ENCODE measurements at regions of chr6 and their contacts with region 1.

Region 1: DNA sequence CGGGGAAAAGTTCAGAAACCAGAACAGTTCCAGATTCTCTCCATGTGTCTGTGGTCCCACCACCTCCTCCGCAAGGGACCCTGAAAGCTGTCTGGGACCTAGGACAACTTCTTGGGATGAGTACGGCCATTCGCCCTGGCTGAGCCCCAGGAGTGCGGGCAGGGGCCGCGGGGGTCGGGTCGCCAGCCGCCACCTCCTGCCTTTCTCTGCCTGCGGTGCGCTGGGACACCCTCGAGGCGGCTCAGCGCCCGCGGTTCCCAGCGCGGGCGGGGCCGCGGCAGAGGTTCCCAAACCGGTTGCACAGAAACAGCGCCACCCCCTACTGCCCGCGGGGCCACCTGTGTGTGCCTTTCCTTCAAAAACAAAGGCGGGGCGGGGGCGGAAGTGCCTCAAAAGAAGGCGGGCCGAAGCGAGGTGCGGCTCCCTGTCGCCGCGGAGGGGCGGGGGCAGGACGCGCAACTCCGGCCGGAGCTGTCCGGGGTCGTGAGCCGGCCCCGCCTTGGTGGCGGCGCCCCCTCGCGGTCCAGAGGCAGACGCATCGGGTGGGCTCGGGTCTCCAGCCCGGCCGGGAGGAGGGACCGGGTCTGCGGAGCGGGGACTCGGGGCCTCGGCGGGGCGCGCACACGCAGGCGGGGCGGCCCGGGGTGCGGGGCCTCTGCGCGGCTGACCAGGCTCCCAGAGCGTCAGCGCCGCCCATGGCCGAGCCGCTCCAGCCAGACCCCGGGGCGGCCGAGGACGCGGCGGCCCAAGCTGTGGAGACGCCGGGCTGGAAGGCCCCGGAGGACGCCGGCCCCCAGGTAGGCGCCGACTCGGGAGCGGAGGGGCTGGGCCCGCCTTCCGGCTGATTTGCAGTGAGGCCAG is at the start of gene HEBP2:
- DNase-seq: peak; percentile 92
- CTCF ChIP-seq: peak; percentile 65

Region 2: GRCh38 chr6:138349891-138350290 is 54.1 kb before region 1 on chr6:
- CTCF ChIA-PET with region 1: no interaction called
- POLR2A ChIA-PET with region 1: no interaction called
- DNase-seq: no peak
- CTCF ChIP-seq: no peak

Region 3: GRCh38 chr6:138415125-138415524 is 11.1 kb after region 1 on chr6:
- CTCF ChIA-PET with region 1: interaction called, 29 read pairs
- POLR2A ChIA-PET with region 1: interaction called, 5 read pairs
- DNase-seq: no peak
- CTCF ChIP-seq: no peak

Region 4: DNA sequence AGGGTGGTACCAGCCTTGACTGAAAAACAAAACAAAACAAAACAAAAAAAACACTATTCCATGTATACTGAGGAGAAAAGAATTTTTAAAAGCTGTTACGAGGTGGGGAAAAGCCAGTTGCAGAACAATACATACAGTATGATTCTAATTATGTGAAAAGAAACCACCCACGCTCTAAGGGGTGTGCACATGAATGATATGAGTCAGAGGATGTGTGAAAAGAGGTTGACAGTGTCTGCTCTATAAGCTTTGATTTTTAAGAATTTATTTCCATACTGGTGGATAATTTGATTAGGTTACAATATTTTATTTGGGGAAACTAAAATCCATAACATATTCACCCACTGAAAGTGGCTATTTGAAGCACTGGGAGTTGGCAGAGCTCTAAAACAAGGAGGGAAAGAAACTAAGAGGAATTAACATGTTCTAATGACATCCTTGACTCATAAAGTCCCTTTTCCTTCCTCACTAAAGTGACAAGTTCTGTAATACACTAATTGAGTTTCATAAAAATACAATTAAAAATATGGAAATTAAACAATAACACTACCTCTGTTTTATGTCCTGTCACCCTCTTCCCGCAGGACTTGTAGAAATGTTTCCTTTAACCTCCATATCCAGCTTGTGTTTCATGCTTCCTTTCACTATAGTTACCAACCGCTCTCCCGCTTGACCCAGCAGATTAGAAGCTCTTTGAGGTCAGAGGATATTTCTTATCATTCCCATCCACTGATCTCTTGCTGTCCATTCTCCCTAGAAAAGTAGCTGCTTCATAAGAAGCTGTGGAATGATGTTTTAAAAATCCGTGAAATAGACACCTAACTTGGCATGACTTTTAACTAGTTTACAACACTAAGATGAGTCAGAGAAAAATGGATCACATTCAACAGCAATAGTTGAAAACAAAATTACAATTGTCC is 250.9 kb after region 1 on chr6:
- CTCF ChIA-PET with region 1: no interaction called
- POLR2A ChIA-PET with region 1: no interaction called
- DNase-seq: peak; percentile 56
- CTCF ChIP-seq: no peak

Region 5: GRCh38 chr6:138722425-138723371 is 318.7 kb after region 1 on chr6:
- CTCF ChIA-PET with region 1: no interaction called
- POLR2A ChIA-PET with region 1: no interaction called
- DNase-seq: no peak
- CTCF ChIP-seq: no peak

Measured in GM10248 (cell line).